ENCODE measurements at regions of chr1 and their contacts with region 1.

Region 1: DNA sequence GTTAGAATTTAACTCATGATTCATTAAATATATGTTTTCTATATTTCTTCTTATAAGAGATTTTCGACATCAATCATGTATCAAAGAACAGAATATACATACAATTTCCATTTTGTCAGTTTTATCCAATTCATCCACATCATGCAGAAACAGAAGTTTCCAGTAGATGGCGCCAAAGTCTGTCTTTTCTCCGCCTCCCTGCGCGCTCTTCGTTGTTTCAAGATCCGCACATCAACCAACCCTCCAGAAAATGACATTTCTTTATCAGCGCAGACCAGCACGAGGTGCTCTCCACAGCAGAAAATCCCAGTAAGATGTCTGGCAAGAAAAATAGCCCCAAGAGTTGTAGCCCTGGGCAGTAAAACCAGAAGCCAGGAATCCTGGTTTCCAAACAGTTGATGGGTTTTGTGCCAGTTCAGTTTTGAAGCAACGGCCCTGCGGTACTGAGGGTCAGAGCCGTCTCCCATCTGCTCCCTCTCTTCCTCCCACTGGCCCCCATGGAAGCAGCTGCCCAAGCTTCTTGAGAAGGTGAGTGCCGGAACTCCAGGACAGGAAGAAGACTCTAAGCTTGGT is 38.6 kb upstream of the GPR137B start:
- DNase-seq: peak in 8 of 9 experiments; percentile 30 to 74 (median 61)
- ATAC-seq: peak; percentile 74
- H3K4me3 ChIP-seq: no peak overlapping the region
- H3K4me3 Mint-ChIP-seq: no peak overlapping the region
- H3K27ac ChIP-seq: no peak overlapping the region
- H3K27ac Mint-ChIP-seq: no peak overlapping the region
- H3K4me1 ChIP-seq: no peaks in the 10 kb centered on the region
- H3K4me1 Mint-ChIP-seq: peaks cover 2% of the 10 kb centered on the region
- H3K27me3 ChIP-seq: no peaks in the 10 kb centered on the region
- H3K27me3 Mint-ChIP-seq: no peaks in the 10 kb centered on the region
- CTCF ChIP-seq: peak; percentile 88

Region 2: DNA sequence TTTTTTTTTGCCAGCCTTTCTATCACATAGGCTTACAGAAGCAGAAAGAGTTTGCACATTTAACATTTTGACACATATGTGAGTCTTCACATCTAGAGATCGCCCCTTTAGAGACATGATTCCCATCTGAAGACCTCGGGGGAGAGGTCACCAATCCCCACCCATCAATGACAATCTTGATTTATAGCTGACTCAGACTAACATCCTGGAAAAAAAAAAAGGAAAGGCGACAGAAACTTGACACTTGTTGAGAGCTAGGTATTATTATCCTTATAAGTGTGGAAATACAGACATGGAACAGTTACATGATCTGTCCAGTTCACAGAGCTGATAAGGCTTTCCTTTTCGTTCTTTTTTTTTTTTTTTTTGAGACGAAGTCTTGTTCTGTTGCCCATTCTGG is 10.8 kb before region 1 on chr1:
- CTCF ChIA-PET with region 1: interaction called, 10 read pairs
- POLR2A ChIA-PET with region 1: no interaction called
- intact Hi-C with region 1: no loop called
- DNase-seq: no peak
- ATAC-seq: no peak
- H3K4me3 ChIP-seq: no peak overlapping the region
- H3K4me3 Mint-ChIP-seq: no peak overlapping the region
- H3K27ac ChIP-seq: no peak overlapping the region
- H3K27ac Mint-ChIP-seq: no peak overlapping the region
- H3K4me1 ChIP-seq: no peaks in the 10 kb centered on the region
- H3K4me1 Mint-ChIP-seq: peaks cover 2% of the 10 kb centered on the region
- H3K27me3 ChIP-seq: no peaks in the 10 kb centered on the region
- H3K27me3 Mint-ChIP-seq: peaks cover 29% of the 10 kb centered on the region
- CTCF ChIP-seq: no peak

Region 3: DNA sequence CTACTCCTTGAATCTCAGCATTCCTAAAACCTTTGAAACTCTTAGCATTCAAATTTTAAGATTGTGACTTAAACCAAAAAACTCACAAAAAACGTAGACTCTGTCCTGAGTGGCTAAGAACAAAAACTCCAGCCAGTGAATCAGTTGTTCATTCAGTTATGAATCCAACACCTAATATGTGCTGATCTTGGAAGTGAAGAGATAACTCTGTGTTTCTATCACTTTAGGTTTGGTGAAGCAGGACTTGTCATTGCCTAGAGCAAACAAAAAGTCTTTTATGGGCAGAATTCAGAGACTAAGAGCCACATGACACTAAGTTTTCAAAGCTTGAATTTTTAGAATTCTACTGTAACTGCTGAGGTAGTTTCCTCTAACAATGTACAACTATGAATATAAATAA is 28.2 kb after region 1 on chr1:
- CTCF ChIA-PET with region 1: no interaction called
- POLR2A ChIA-PET with region 1: no interaction called
- intact Hi-C with region 1: no loop called
- DNase-seq: no peak
- ATAC-seq: no peak
- H3K4me3 ChIP-seq: no peak overlapping the region
- H3K4me3 Mint-ChIP-seq: no peak overlapping the region
- H3K27ac ChIP-seq: no peak overlapping the region
- H3K27ac Mint-ChIP-seq: no peak overlapping the region
- H3K4me1 ChIP-seq: no peaks in the 10 kb centered on the region
- H3K4me1 Mint-ChIP-seq: no peaks in the 10 kb centered on the region
- H3K27me3 ChIP-seq: no peaks in the 10 kb centered on the region
- H3K27me3 Mint-ChIP-seq: peaks cover 12% of the 10 kb centered on the region
- CTCF ChIP-seq: no peak

Region 4: GRCh38 chr1:236269439-236269838 is 165.7 kb after region 1 on chr1:
- CTCF ChIA-PET with region 1: no interaction called
- POLR2A ChIA-PET with region 1: no interaction called
- intact Hi-C with region 1: no loop called
- DNase-seq: no peak
- ATAC-seq: no peak
- H3K4me3 ChIP-seq: no peak overlapping the region
- H3K4me3 Mint-ChIP-seq: no peak overlapping the region
- H3K27ac ChIP-seq: no peak overlapping the region
- H3K27ac Mint-ChIP-seq: no peak overlapping the region
- H3K4me1 ChIP-seq: no peaks in the 10 kb centered on the region
- H3K4me1 Mint-ChIP-seq: peaks cover 16% of the 10 kb centered on the region
- H3K27me3 ChIP-seq: no peaks in the 10 kb centered on the region
- H3K27me3 Mint-ChIP-seq: no peaks in the 10 kb centered on the region
- CTCF ChIP-seq: no peak

Region 5: GRCh38 chr1:236480758-236481436 is 377.2 kb after region 1 on chr1:
- CTCF ChIA-PET with region 1: interaction called, 52 read pairs
- POLR2A ChIA-PET with region 1: no interaction called
- intact Hi-C with region 1: no loop called
- DNase-seq: no peak
- ATAC-seq: no peak
- H3K4me3 ChIP-seq: no peak overlapping the region
- H3K4me3 Mint-ChIP-seq: no peak overlapping the region
- H3K27ac ChIP-seq: no peak overlapping the region
- H3K27ac Mint-ChIP-seq: no peak overlapping the region
- H3K4me1 ChIP-seq: no peaks in the 10 kb centered on the region
- H3K4me1 Mint-ChIP-seq: no peaks in the 10 kb centered on the region
- H3K27me3 ChIP-seq: no peaks in the 10 kb centered on the region
- H3K27me3 Mint-ChIP-seq: peaks cover 3% of the 10 kb centered on the region
- CTCF ChIP-seq: no peak

Region 6: DNA sequence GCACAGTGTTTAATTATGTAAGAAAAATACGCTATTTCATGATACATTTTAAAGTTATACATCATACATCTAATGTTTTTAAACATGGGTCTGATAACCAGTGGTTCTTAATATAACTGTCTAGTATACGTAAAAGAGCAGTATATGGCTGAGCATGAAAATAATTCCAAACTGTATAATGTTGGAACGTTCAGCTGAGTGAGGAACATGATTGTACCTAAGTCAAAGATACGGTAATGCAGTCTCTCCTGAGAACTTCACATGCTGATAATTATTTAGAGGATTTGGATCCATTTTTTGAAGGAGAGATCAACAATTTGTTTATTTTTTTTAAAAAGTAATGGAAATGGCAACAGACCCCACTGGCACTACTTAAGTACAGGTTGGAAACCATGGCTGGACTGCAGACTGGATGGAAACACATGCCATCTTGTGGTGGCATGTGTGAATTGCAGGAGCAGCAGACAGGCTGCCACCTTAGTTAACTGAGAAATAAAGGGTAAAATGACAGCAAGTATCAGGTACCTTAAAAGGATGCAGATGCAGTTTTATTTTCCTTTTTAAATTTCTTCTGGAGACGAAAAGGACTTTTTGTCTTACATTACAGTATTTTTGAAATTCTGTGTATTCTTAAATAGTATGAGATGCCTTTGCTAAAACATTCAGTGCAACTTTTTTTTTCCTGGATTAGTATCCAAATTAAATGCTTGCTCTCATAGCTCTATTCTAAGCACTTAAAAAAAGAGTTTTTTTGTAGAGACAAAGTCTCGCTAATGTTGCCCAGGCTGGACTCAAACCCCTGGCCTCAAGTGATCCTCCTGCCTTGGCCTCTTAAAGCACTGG is 765.1 kb after region 1 on chr1:
- CTCF ChIA-PET with region 1: no interaction called
- POLR2A ChIA-PET with region 1: no interaction called
- intact Hi-C with region 1: loop called (anchors 1 to 2 kb)
- DNase-seq: peak in 8 of 9 experiments; percentile 10 to 76 (median 46)
- ATAC-seq: peak; percentile 78
- H3K4me3 ChIP-seq: no peak overlapping the region
- H3K4me3 Mint-ChIP-seq: no peak overlapping the region
- H3K27ac ChIP-seq: no peak overlapping the region
- H3K27ac Mint-ChIP-seq: no peak overlapping the region
- H3K4me1 ChIP-seq: no peaks in the 10 kb centered on the region
- H3K4me1 Mint-ChIP-seq: no peaks in the 10 kb centered on the region
- H3K27me3 ChIP-seq: no peaks in the 10 kb centered on the region
- H3K27me3 Mint-ChIP-seq: no peaks in the 10 kb centered on the region
- CTCF ChIP-seq: peak; percentile 94

Region 7: GRCh38 chr1:237562242-237562823 is 1458.6 kb after region 1 on chr1:
- CTCF ChIA-PET with region 1: interaction called, 6 read pairs
- POLR2A ChIA-PET with region 1: no interaction called
- intact Hi-C with region 1: loop called in 1 of 2 experiments (anchors 2 kb)
- DNase-seq: peak in 2 of 9 experiments; percentile 54 to 62
- ATAC-seq: no peak
- H3K4me3 ChIP-seq: no peak overlapping the region
- H3K4me3 Mint-ChIP-seq: no peak overlapping the region
- H3K27ac ChIP-seq: no peak overlapping the region
- H3K27ac Mint-ChIP-seq: no peak overlapping the region
- H3K4me1 ChIP-seq: no peaks in the 10 kb centered on the region
- H3K4me1 Mint-ChIP-seq: no peaks in the 10 kb centered on the region
- H3K27me3 ChIP-seq: no peaks in the 10 kb centered on the region
- H3K27me3 Mint-ChIP-seq: peaks cover 11% of the 10 kb centered on the region
- CTCF ChIP-seq: peak; percentile 62

Measured in CD8-positive, alpha-beta T cell (primary cell).